Mammary epithelial cell (primary cell): ENCODE measurements at regions of chr14 and their contacts with region 1.

Region 1: DNA sequence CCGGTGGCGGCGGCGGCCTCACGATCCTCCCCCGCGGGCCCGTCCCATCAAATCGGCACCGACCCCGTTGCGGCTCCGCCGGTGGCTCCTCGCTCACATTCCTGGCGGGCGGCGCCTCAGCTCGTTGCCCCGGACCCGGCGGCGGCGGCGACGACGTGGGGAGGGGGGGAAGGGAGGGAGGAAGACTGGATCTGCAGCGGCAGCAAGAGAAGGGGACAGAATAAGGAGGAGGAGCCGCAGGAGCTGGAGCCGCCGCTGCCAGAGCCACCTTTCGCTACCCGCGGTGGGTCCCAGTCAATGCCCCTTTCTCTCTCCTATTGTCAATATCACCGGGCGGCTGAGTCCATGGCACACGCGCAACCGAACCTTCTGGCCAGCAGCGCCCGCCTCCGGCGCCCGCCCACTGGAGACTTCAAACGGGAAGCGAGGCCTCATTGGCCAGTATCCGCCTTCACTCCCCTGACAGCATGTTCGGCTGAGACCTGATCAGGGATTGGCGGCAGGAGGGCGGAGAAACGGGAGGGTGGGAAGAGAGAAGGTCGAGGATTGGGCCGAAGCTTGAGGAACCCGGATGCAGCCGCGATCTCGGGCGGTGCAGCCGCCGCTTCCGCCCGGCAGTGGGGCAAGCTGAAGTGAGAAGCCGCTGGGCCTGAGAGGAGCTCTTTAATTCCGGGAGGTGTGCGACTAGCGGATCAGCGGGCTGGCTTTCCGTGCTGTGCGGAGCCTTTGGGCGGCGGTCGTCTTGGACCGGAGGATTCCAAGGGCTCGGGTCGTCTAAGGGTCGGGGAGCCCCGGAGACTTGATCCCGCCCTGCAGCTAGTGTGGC is at the start of gene PPP2R5E:
- DNase-seq: peak; percentile 99
- H3K4me3 ChIP-seq: peak within 1 kb of the TSS; percentile 86 to 99 (median 89)
- H3K27ac ChIP-seq: peak within 1 kb of the TSS; percentile 52
- H3K4me1 ChIP-seq: peaks cover 4% of the 10 kb centered on the region
- H3K27me3 ChIP-seq: no peaks in the 10 kb centered on the region
- CTCF ChIP-seq: no peak
- total RNA-seq, gene PPP2R5E: 27.2 to 50.3 TPM

Region 2: DNA sequence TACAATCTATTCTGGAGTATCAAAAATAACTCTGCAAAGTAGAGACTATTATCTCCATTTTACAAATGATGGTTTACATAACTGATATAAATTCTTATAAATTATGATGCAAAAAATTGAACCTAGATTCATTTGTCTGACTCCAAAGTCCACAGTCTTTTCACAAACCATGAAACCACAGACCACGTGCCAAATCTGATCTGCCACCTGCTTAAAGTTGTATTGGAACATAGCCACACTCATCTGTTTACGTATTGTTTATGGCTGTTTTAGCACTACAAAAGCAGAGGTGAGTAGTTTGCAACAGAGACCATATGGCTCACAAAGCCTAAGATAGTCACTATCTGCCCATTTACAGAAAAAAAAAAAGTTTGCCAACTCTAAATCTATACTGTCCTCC is 603.2 kb before region 1 on chr14:
- CTCF ChIA-PET with region 1: no interaction called
- dilution Hi-C with region 1: no loop called
- in situ Hi-C with region 1: no loop called
- intact Hi-C with region 1: loop called (anchors 10 kb)
- DNase-seq: no peak
- H3K4me3 ChIP-seq: no peak overlapping the region
- H3K27ac ChIP-seq: no peak overlapping the region
- H3K4me1 ChIP-seq: no peaks in the 10 kb centered on the region
- H3K27me3 ChIP-seq: no peaks in the 10 kb centered on the region
- CTCF ChIP-seq: no peak

Region 3: GRCh38 chr14:63388763-63389431 is 154.3 kb before region 1 on chr14:
- CTCF ChIA-PET with region 1: interaction called, 6 read pairs
- dilution Hi-C with region 1: no loop called
- in situ Hi-C with region 1: loop called in 1 of 2 experiments (anchors 10 kb)
- intact Hi-C with region 1: loop called (anchors 1 kb)
- DNase-seq: peak; percentile 26
- H3K4me3 ChIP-seq: no peak overlapping the region
- H3K27ac ChIP-seq: no peak overlapping the region
- H3K4me1 ChIP-seq: no peaks in the 10 kb centered on the region
- H3K27me3 ChIP-seq: no peaks in the 10 kb centered on the region
- CTCF ChIP-seq: peak; percentile 85 to 89

Region 4: GRCh38 chr14:63437953-63438757 is 105.1 kb before region 1 on chr14:
- CTCF ChIA-PET with region 1: no interaction called
- dilution Hi-C with region 1: no loop called
- in situ Hi-C with region 1: no loop called
- intact Hi-C with region 1: loop called (anchors 5 kb)
- DNase-seq: peak; percentile 95
- H3K4me3 ChIP-seq: peak overlapping the region in 2 of 3 experiments; percentile 12 to 36
- H3K27ac ChIP-seq: peak overlapping the region; percentile 48
- H3K4me1 ChIP-seq: peaks cover 13% of the 10 kb centered on the region
- H3K27me3 ChIP-seq: no peaks in the 10 kb centered on the region
- CTCF ChIP-seq: peak in 1 of 2 donors; percentile 18

Region 5: DNA sequence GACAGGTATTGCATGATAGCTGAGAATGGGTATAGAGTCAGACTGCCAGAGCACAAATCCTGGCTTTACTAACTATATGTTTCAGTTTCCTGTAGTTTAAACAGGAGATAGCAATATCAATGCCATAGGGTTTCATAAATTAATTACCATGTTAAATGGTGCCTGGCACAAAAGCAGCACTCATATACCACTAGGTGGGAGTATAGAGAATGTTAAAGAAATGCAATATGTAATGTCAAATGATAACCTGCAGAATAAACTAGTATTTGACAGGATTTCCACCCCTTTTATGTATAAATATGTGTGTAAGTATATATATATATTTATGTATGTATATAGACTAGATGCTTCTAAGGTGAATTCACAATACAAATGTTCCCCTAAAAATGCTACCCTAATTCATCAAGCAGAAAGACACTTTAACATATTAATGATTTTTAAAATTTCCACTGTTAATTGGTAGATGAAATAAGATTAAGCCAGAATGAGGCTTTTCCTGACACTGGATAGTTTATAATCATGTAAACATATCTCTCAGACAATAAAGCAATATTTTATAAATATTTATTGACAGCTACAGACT is 89.8 kb after region 1 on chr14:
- CTCF ChIA-PET with region 1: no interaction called
- dilution Hi-C with region 1: no loop called
- in situ Hi-C with region 1: no loop called
- intact Hi-C with region 1: loop called (anchors 2 kb)
- DNase-seq: no peak
- H3K4me3 ChIP-seq: no peak overlapping the region
- H3K27ac ChIP-seq: no peak overlapping the region
- H3K4me1 ChIP-seq: no peaks in the 10 kb centered on the region
- H3K27me3 ChIP-seq: no peaks in the 10 kb centered on the region
- CTCF ChIP-seq: peak; percentile 59 to 72

Region 6: GRCh38 chr14:63641473-63642228 is 98.4 kb after region 1 on chr14 and contains the start of gene WDR89:
- CTCF ChIA-PET with region 1: no interaction called
- dilution Hi-C with region 1: no loop called
- in situ Hi-C with region 1: no loop called
- intact Hi-C with region 1: loop called (anchors 1 kb)
- DNase-seq: peak; percentile 100
- H3K4me3 ChIP-seq: peak within 1 kb of the TSS; percentile 66 to 91 (median 77)
- H3K27ac ChIP-seq: peak within 1 kb of the TSS; percentile 97
- H3K4me1 ChIP-seq: peaks cover 3% of the 10 kb centered on the region
- H3K27me3 ChIP-seq: no peaks in the 10 kb centered on the region
- CTCF ChIP-seq: peak; percentile 77 to 83
- total RNA-seq, gene WDR89: 10.5 to 13.0 TPM

Region 7: GRCh38 chr14:63770187-63770807 is 227.1 kb after region 1 on chr14:
- CTCF ChIA-PET with region 1: interaction called, 4 read pairs
- dilution Hi-C with region 1: no loop called
- in situ Hi-C with region 1: no loop called
- intact Hi-C with region 1: loop called (anchors 5 kb)
- DNase-seq: peak; percentile 40
- H3K4me3 ChIP-seq: no peak overlapping the region
- H3K27ac ChIP-seq: no peak overlapping the region
- H3K4me1 ChIP-seq: peaks cover 11% of the 10 kb centered on the region
- H3K27me3 ChIP-seq: no peaks in the 10 kb centered on the region
- CTCF ChIP-seq: peak; percentile 54 to 72